Esophagus squamous epithelium (tissue), 5 donors: ENCODE measurements at regions of chr7 and their contacts with region 1.

Region 1: GRCh38 chr7:104983578-104984539 is 30.1 kb upstream of the KMT2E start:
- DNase-seq: peak; percentile 52
- H3K4me3 ChIP-seq: peak overlapping the region; percentile 46 to 79 (median 69)
- H3K27ac ChIP-seq: peak overlapping the region; percentile 95 to 99 (median 98)
- H3K4me1 ChIP-seq: peaks cover 21 to 55% (median 46%) of the 10 kb centered on the region in 3 donors
- H3K27me3 ChIP-seq: no peaks in the 10 kb centered on the region
- CTCF ChIP-seq: peak in 5 of 6 experiments; percentile 57 to 77 (median 72)
- POLR2A ChIP-seq: peak in 3 of 4 donors; percentile 52 to 91 (median 79)

Region 2: GRCh38 chr7:105522062-105522936 is 538.4 kb after region 1 on chr7 and contains the start of gene PUS7:
- intact Hi-C with region 1: loop called (anchors 10 kb)
- DNase-seq: peak; percentile 37
- H3K4me3 ChIP-seq: peak within 1 kb of the TSS; percentile 65 to 91 (median 88)
- H3K27ac ChIP-seq: peak within 1 kb of the TSS; percentile 84 to 96 (median 90)
- H3K4me1 ChIP-seq: peaks cover 0 to 20% (median 11%) of the 10 kb centered on the region in 3 donors
- H3K27me3 ChIP-seq: no peaks in the 10 kb centered on the region
- CTCF ChIP-seq: peak in 1 of 6 experiments; percentile 6
- POLR2A ChIP-seq: peak in 2 of 4 donors; percentile 65 to 70
- total RNA-seq, gene PUS7: 9.6 to 33.0 (median 23.1) TPM